MCF 10A (cell line): ENCODE measurements at regions of chr1 and their contacts with region 1.

Region 1: DNA sequence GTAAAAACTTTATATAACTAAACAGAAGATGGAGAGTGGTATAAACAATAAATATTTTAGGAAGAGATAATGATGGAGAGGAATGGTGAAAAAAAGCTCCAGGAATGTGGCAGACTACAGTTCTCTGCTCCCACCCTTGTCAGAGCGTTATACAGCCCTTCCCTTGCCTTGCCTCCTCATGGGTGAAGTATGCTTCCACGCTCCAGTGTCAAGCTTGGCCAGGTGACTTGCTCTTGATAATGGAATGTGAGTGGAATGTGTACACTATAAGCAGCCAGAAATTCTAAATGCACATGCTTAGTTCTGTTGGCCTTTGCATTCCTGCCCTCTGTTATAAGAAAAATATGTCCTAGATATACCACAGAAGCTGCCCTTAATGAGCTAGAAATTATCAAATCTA is 24.7 kb upstream of the POGK start:
- DNase-seq: no peak
- H3K4me3 Mint-ChIP-seq: no peak overlapping the region
- H3K27ac Mint-ChIP-seq: no peak overlapping the region
- H3K4me1 Mint-ChIP-seq: no peaks in the 10 kb centered on the region
- H3K27me3 Mint-ChIP-seq: no peaks in the 10 kb centered on the region
- CTCF ChIP-seq: no peak

Region 2: GRCh38 chr1:166730299-166730888 is 84.2 kb before region 1 on chr1:
- CTCF ChIA-PET with region 1: interaction called, 11 read pairs
- POLR2A ChIA-PET with region 1: no interaction called
- intact Hi-C with region 1: no loop called
- DNase-seq: peak; percentile 84
- H3K4me3 Mint-ChIP-seq: no peak overlapping the region
- H3K27ac Mint-ChIP-seq: no peak overlapping the region
- H3K4me1 Mint-ChIP-seq: peaks cover 6% of the 10 kb centered on the region
- H3K27me3 Mint-ChIP-seq: no peaks in the 10 kb centered on the region
- CTCF ChIP-seq: peak; percentile 18